Gastrocnemius medialis (tissue), 4 donors: ENCODE measurements at regions of chr4 and their contacts with region 1.

Region 1: DNA sequence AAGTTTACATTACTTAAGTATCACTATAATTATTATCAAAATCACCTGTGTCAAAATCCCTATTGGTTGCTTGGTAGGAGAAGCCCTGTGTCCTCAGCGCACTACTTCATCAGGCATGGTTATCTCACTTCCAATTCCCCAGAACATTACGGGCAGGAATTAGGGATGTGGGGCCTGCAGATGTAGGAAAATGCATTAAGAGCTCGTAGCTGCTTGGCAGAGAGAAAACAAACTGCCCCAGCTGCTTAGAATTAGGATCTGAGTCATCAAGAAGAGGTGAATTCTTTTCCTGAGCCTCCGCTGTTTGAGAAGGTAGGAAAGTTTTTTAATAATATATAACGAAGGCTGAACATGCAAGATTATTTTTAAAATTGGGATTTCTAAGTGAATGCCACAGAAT is 31.1 kb upstream of the CLNK start:
- DNase-seq: no peak
- ATAC-seq: no peak
- H3K4me3 ChIP-seq: no peak overlapping the region
- H3K27ac ChIP-seq: no peak overlapping the region
- H3K4me1 ChIP-seq: no peaks in the 10 kb centered on the region
- H3K27me3 ChIP-seq: no peaks in the 10 kb centered on the region
- CTCF ChIP-seq: no peak
- POLR2A ChIP-seq: no peak

Region 2: GRCh38 chr4:10741961-10742699 is 26.4 kb after region 1 on chr4:
- in situ Hi-C with region 1: no loop called
- intact Hi-C with region 1: loop called (anchors 1 kb)
- DNase-seq: no peak
- ATAC-seq: no peak
- H3K4me3 ChIP-seq: no peak overlapping the region
- H3K27ac ChIP-seq: no peak overlapping the region
- H3K4me1 ChIP-seq: no peaks in the 10 kb centered on the region
- H3K27me3 ChIP-seq: no peaks in the 10 kb centered on the region
- CTCF ChIP-seq: no peak
- POLR2A ChIP-seq: no peak

Region 3: GRCh38 chr4:10808591-10808990 is 92.9 kb after region 1 on chr4:
- in situ Hi-C with region 1: no loop called
- intact Hi-C with region 1: no loop called
- DNase-seq: no peak
- ATAC-seq: no peak
- H3K4me3 ChIP-seq: no peak overlapping the region
- H3K27ac ChIP-seq: no peak overlapping the region
- H3K4me1 ChIP-seq: no peaks in the 10 kb centered on the region
- H3K27me3 ChIP-seq: no peaks in the 10 kb centered on the region
- CTCF ChIP-seq: no peak
- POLR2A ChIP-seq: no peak

Region 4: GRCh38 chr4:10832806-10833628 is 117.3 kb after region 1 on chr4:
- in situ Hi-C with region 1: no loop called
- intact Hi-C with region 1: no loop called
- DNase-seq: no peak
- ATAC-seq: no peak
- H3K4me3 ChIP-seq: no peak overlapping the region
- H3K27ac ChIP-seq: no peak overlapping the region
- H3K4me1 ChIP-seq: no peaks in the 10 kb centered on the region
- H3K27me3 ChIP-seq: no peaks in the 10 kb centered on the region
- CTCF ChIP-seq: no peak
- POLR2A ChIP-seq: no peak

Region 5: GRCh38 chr4:11286533-11286932 is 570.8 kb after region 1 on chr4:
- in situ Hi-C with region 1: no loop called
- intact Hi-C with region 1: no loop called
- DNase-seq: no peak
- ATAC-seq: no peak
- H3K4me3 ChIP-seq: no peak overlapping the region
- H3K27ac ChIP-seq: no peak overlapping the region
- H3K4me1 ChIP-seq: no peaks in the 10 kb centered on the region
- H3K27me3 ChIP-seq: no peaks in the 10 kb centered on the region
- CTCF ChIP-seq: no peak
- POLR2A ChIP-seq: no peak

Region 6: DNA sequence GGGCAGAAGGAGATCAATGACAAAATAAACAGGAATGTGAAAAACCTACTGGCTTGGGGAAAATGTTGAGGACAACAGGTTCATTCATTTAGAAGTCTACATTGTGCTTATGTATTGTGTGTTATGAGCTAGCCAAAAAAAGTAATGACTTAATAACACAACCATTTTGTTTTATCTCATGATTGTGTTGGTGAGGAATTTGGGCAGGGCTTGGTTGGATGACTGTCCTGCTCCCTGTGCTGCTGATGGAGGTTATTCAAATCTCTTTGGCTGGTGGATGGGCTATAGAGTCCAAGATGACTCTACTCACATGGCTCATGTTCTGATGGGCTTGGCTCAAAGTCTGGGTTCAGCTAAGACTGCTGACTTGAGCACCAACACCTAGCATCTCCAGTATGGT is 596.7 kb after region 1 on chr4:
- in situ Hi-C with region 1: no loop called
- intact Hi-C with region 1: no loop called
- DNase-seq: no peak
- ATAC-seq: peak in 1 of 2 donors; percentile 33
- H3K4me3 ChIP-seq: no peak overlapping the region
- H3K27ac ChIP-seq: no peak overlapping the region
- H3K4me1 ChIP-seq: no peaks in the 10 kb centered on the region
- H3K27me3 ChIP-seq: no peaks in the 10 kb centered on the region
- CTCF ChIP-seq: no peak
- POLR2A ChIP-seq: no peak